MCF 10A (cell line): ENCODE measurements at regions of chrX and their contacts with region 1.

Region 1: DNA sequence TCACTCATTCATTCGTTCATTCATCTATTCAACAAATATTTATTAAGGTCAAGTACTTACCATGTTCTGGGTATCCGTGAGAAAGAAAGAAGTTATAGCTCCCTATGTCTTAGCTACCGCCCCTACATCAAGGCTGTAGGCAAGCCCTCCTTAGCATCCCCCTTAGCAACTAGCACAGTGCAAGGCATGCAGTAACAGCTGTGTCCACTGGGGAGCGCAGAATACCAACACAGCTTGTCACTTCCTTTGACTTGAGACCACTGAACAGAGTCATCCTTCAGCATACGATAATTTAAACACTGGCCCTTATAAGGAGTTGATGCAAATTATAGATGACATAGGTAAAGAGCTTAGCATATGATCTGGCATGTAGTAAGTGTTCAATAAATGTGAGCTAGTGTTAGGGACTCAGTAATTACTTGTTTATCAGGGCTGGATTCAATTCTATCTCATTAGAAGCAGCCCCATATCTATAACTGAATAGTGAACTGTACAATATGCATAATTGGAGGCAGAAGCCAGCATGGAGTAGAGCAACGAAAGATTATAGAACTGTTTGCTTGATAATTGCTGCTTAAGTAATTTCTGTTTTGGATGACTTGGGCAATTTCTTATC is 8.7 kb downstream of the KIAA1210 start:
- DNase-seq: peak; percentile 60
- H3K4me3 Mint-ChIP-seq: no peak overlapping the region
- H3K27ac Mint-ChIP-seq: no peak overlapping the region
- H3K4me1 Mint-ChIP-seq: no peaks in the 10 kb centered on the region
- H3K27me3 Mint-ChIP-seq: peaks cover 75% of the 10 kb centered on the region
- CTCF ChIP-seq: peak; percentile 76

Region 2: DNA sequence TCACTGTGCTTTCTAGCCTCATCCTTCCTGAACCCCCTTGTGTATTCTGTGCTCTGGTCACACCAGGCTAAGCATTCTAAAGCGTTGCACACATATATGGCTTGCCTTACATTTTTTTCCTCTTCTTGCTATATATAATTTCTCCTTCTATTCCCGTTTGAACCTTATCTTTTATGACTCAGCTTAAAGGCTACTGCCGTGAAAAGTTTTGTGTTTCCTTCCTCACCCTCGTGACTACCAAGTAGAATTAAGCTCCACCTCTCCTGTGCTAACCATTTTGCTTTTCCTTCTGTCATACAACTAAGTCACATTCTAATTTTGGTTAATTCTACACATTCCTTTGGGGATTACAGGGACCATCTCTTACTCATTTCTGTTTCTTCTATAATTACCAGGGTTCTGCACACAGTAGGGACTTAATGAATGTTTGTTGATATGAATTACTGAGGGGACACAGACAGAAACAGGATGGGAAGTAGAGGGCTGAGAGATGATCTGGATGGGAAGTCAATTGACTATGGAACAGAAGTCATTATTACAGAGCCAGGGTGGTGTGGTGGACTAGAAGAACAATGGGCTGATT is 556.2 kb before region 1 on chrX:
- CTCF ChIA-PET with region 1: no interaction called
- POLR2A ChIA-PET with region 1: no interaction called
- intact Hi-C with region 1: no loop called
- DNase-seq: no peak
- H3K4me3 Mint-ChIP-seq: no peak overlapping the region
- H3K27ac Mint-ChIP-seq: no peak overlapping the region
- H3K4me1 Mint-ChIP-seq: no peaks in the 10 kb centered on the region
- H3K27me3 Mint-ChIP-seq: peaks cover 23% of the 10 kb centered on the region
- CTCF ChIP-seq: no peak

Region 3: DNA sequence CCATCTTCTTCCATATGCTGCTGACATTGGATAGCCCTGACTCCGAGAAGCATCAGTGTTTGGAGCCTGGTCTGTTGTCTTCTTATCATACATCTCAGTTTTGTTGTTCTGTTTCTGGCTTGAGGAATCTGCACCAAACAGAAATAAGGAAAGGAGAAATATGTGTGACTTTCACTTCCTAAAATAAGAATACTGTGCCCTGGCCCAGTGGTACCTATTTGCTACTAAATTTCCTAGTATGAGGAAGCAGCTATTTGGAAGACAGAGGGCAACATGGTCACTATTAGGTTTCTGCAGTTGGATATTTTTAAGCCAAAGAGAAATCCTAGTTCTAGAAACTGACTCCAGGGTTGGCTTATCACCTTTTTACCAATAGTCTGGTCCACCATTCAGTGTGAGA is 29.3 kb before region 1 on chrX:
- CTCF ChIA-PET with region 1: no interaction called
- POLR2A ChIA-PET with region 1: no interaction called
- intact Hi-C with region 1: no loop called
- DNase-seq: no peak
- H3K4me3 Mint-ChIP-seq: no peak overlapping the region
- H3K27ac Mint-ChIP-seq: no peak overlapping the region
- H3K4me1 Mint-ChIP-seq: no peaks in the 10 kb centered on the region
- H3K27me3 Mint-ChIP-seq: peaks cover 56% of the 10 kb centered on the region
- CTCF ChIP-seq: no peak

Region 4: DNA sequence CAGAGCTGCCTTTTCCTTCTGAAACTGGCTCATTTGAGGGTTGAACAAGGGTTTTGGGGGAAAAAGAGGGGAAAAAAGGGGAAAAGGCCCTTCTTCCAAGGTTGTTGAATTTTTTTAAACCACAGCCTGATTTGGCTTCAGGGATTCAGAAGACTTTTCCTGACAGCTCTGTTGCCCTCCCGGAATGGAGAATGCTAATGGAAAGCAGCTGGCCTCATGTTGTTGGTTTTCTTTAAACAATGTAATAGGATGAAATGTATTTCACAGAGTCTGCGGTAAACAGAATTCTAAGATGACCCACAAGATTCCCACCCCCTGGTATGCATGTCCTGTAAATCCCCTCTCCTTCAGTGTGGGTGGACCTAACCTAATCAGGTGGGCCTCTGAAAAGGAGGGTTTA is 12.0 kb after region 1 on chrX:
- CTCF ChIA-PET with region 1: interaction called, 11 read pairs
- POLR2A ChIA-PET with region 1: interaction called, 3 read pairs
- intact Hi-C with region 1: no loop called
- DNase-seq: no peak
- H3K4me3 Mint-ChIP-seq: no peak overlapping the region
- H3K27ac Mint-ChIP-seq: no peak overlapping the region
- H3K4me1 Mint-ChIP-seq: no peaks in the 10 kb centered on the region
- H3K27me3 Mint-ChIP-seq: peaks cover 76% of the 10 kb centered on the region
- CTCF ChIP-seq: no peak

Region 5: DNA sequence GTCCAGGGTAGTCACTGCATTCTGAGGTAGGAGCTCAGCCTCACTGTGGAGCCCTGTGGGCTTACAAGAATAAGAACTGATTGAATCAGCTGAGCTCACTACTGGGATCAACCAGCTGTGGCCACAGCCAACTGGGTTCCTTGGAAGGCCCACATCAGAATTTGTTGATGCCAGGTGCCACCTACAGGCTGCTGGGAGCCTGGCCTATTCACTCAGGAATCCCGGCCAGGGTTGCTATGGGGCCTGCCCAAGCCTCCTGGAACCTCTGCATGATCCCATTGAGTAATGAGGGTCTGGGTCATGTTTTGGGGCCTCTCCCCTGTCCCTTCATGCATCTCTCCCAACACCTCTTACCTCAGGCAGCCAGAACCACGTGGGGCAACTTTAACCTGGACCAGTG is 62.6 kb after region 1 on chrX:
- CTCF ChIA-PET with region 1: interaction called, 3 read pairs
- POLR2A ChIA-PET with region 1: no interaction called
- intact Hi-C with region 1: loop called (anchors 1 kb)
- DNase-seq: peak; percentile 45
- H3K4me3 Mint-ChIP-seq: no peak overlapping the region
- H3K27ac Mint-ChIP-seq: no peak overlapping the region
- H3K4me1 Mint-ChIP-seq: no peaks in the 10 kb centered on the region
- H3K27me3 Mint-ChIP-seq: peaks cover 25% of the 10 kb centered on the region
- CTCF ChIP-seq: no peak

Region 6: GRCh38 chrX:119211649-119212014 is 92.7 kb after region 1 on chrX:
- CTCF ChIA-PET with region 1: interaction called, 10 read pairs
- POLR2A ChIA-PET with region 1: no interaction called
- intact Hi-C with region 1: no loop called
- DNase-seq: no peak
- H3K4me3 Mint-ChIP-seq: no peak overlapping the region
- H3K27ac Mint-ChIP-seq: no peak overlapping the region
- H3K4me1 Mint-ChIP-seq: no peaks in the 10 kb centered on the region
- H3K27me3 Mint-ChIP-seq: peaks cover 55% of the 10 kb centered on the region
- CTCF ChIP-seq: no peak

Region 7: DNA sequence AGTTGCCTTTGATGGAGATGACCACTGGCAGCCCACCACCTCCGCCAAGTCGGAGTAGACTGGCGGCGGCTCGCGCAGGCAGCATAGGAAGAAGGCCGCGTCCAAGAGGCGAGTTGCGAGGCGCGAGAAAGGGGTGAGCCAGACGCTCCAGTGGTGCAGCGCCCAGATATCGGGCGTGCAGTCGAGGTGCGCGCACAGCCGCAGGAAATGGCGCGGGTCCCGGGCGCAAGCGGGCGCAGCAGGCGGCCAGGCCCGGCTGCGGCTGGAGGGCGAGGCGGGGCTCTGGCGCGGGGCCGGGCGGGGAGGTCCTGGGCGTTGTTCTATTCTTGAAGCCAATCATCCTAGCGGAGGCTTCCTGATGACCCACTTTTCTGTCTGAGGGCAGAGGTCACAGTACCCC is 104.0 kb after region 1 on chrX:
- CTCF ChIA-PET with region 1: interaction called, 10 read pairs
- POLR2A ChIA-PET with region 1: no interaction called
- intact Hi-C with region 1: loop called (anchors 1 kb)
- DNase-seq: no peak
- H3K4me3 Mint-ChIP-seq: no peak overlapping the region
- H3K27ac Mint-ChIP-seq: no peak overlapping the region
- H3K4me1 Mint-ChIP-seq: no peaks in the 10 kb centered on the region
- H3K27me3 Mint-ChIP-seq: peaks cover 61% of the 10 kb centered on the region
- CTCF ChIP-seq: no peak

Region 8: DNA sequence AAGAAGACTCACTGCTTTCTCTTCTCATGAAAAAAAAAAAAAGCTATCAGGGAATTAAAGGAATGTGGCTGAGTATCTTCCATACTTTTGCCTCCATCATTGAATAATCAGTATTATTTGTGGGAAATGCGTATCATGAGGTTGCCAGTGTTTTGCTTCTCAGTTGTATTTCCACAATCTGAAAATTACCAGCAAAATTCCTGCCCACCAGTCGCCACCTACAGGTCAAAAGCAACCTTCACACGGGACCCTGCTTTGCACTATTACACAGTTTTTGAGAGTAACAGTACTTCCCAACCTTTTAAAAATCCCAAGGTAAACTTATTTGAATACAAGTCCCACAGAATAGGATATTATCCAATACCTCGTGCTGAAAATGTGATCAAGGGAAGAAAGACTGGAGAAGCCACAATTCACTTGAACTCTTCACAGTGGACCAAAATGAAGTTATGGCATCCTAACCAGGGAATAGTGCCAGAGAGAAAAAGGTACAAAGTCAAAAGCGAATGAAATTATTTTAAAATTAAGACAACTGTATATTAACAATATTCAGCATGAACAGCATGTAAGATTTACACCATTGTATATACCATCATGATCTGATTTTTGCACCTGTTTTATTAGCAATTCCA is 147.6 kb after region 1 on chrX:
- CTCF ChIA-PET with region 1: interaction called, 7 read pairs
- POLR2A ChIA-PET with region 1: no interaction called
- intact Hi-C with region 1: loop called (anchors 2 kb)
- DNase-seq: peak; percentile 37
- H3K4me3 Mint-ChIP-seq: no peak overlapping the region
- H3K27ac Mint-ChIP-seq: no peak overlapping the region
- H3K4me1 Mint-ChIP-seq: no peaks in the 10 kb centered on the region
- H3K27me3 Mint-ChIP-seq: peaks cover 58% of the 10 kb centered on the region
- CTCF ChIP-seq: peak; percentile 49